ENCODE measurements at regions of chr11 and their contacts with region 1.

Region 1: GRCh38 chr11:129766898-129767604 is 48.6 kb upstream of the TMEM45B start:
- DNase-seq: peak; percentile 52
- ATAC-seq: peak; percentile 88
- H3K4me3 ChIP-seq: peak overlapping the region in 2 of 3 experiments; percentile 29 to 46; a peak in 3 of 6 replicates
- H3K27ac ChIP-seq: no peak overlapping the region
- H3K4me1 ChIP-seq: peaks cover 36% of the 10 kb centered on the region
- H3K27me3 ChIP-seq: no peaks in the 10 kb centered on the region
- CTCF ChIP-seq: peak; percentile 89
- EP300 ChIP-seq: no peak
- POLR2A ChIP-seq: no peak
- RAD21 ChIP-seq: no peak

Region 2: DNA sequence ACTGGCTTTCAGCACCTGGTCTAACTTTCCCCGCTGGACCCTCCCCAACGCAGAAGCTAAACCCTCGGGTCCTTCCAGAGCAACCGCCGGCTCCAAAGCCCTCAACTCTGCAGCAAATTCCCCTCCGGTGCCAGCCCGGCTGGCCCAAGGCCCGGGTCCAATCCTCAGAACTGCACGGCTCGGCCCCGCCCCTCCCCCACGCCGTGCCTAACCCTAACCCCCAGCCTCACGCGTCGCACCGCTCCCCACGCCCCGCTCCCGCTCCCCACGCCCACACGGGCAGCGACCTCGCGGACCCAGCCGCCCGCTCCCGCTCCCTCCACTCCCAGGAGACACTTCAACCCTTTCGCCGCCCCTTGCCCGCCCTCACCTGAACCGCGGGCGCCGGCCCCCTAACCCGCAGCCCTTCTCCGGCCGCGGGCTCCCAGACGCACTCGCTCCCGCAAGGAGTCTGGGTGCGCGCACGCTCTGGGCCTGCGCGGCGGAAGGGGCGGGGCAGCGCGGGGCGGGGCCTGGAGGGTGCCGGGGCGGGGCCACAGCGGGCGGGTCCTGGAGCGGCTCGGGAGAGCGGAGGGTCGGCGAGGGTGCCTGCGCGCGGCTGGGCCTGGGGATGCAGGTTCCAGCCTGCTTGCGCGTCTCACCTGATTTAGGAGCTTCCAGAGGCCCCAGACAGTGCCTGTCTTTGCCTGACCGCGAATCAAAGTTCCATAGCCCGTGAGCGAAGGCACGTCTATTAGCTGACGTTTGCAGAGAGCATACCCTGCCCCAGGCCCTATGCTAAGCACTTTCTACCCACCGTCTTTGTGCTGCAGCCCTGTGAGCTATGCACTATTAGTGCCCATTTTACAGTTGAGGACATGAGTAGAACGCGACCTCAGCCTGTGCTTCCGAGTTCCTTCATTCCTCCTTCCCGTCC is 128.3 kb after region 1 on chr11 and contains the start of gene NFRKB:
- CTCF ChIA-PET with region 1: no interaction called
- POLR2A ChIA-PET with region 1: no interaction called
- in situ Hi-C with region 1: no loop called
- intact Hi-C with region 1: loop called (anchors 10 kb)
- DNase-seq: peak; percentile 72
- ATAC-seq: peak; percentile 96
- H3K4me3 ChIP-seq: peak within 1 kb of the TSS; percentile 89 to 98 (median 94)
- H3K27ac ChIP-seq: peak within 1 kb of the TSS; percentile 69
- H3K4me1 ChIP-seq: peaks cover 34% of the 10 kb centered on the region
- H3K27me3 ChIP-seq: no peaks in the 10 kb centered on the region; a peak in 1 of 5 replicates
- CTCF ChIP-seq: peak; percentile 30; the same call in 1 of the 2 replicates
- EP300 ChIP-seq: no peak
- POLR2A ChIP-seq: peak; percentile 72 to 93; a peak in 3 of 4 replicates
- RAD21 ChIP-seq: 0 out of 2 replicates have a peak, but pooled peaks have one; percentile 20
- total RNA-seq, gene NFRKB: 17.9 and 22.9 TPM in 2 replicates